Endothelial cell of umbilical vein (primary cell): ENCODE measurements at regions of chr2 and their contacts with region 1.

Region 1: DNA sequence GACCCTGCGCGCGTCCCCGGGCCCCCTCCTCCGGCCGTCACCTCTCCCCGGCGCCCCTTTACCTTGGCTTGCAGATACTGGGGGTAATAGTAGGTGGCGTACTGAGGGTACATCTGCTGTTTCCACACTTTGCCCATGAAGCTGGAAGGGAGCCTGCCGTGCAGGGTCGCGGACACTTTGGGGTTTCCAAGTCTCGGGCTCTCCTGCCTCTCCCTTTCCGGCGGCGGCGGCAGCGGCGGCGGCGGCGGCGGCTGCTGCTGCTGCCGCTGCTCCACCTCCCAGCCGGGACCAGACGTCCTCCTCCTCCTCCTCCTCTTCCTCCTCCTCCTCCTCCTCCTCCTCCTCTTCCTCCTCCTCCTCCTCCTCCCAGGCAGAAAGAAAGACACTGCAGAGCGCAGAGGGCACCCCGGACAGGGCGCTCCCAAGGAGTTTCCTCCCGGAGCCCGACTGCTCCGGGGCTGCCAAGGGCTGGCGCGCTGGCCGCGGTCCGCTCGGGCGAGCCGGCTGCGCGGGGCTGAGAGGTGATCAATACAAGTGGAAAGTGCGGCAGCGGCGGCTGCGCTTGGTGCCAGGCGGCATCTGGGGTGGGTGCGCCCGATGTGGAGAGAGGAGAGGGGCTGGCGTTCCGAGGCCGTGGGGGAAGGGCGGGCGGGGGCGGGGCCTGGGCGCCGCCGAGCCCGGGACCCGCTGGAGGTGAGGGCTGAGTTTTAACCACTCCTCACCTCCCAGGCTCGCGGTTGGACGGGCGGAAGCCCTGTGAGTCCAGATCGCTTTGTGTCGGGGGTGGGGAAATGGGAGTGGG is at the start of gene RBMS1:
- DNase-seq: no peak
- H3K4me3 ChIP-seq: peak within 1 kb of the TSS; percentile 98 to 100 (median 99)
- H3K27ac ChIP-seq: peak within 1 kb of the TSS; percentile 89
- H3K4me1 ChIP-seq: peaks cover 25% of the 10 kb centered on the region
- H3K27me3 ChIP-seq: no peaks in the 10 kb centered on the region
- CTCF ChIP-seq: no peak
- POLR2A ChIP-seq: no peak
- total RNA-seq, gene RBMS1: 93.3 and 94.8 TPM in 2 replicates

Region 2: GRCh38 chr2:160332318-160332717 is 161.1 kb before region 1 on chr2:
- CTCF ChIA-PET with region 1: interaction called, 3 read pairs
- POLR2A ChIA-PET with region 1: no interaction called
- dilution Hi-C with region 1: no loop called
- intact Hi-C with region 1: loop called (anchors 1 kb)
- DNase-seq: peak; percentile 70
- H3K4me3 ChIP-seq: no peak overlapping the region
- H3K27ac ChIP-seq: no peak overlapping the region
- H3K4me1 ChIP-seq: peaks cover 35% of the 10 kb centered on the region
- H3K27me3 ChIP-seq: no peaks in the 10 kb centered on the region
- CTCF ChIP-seq: peak in 1 of 2 donors; percentile 1
- POLR2A ChIP-seq: no peak

Region 3: DNA sequence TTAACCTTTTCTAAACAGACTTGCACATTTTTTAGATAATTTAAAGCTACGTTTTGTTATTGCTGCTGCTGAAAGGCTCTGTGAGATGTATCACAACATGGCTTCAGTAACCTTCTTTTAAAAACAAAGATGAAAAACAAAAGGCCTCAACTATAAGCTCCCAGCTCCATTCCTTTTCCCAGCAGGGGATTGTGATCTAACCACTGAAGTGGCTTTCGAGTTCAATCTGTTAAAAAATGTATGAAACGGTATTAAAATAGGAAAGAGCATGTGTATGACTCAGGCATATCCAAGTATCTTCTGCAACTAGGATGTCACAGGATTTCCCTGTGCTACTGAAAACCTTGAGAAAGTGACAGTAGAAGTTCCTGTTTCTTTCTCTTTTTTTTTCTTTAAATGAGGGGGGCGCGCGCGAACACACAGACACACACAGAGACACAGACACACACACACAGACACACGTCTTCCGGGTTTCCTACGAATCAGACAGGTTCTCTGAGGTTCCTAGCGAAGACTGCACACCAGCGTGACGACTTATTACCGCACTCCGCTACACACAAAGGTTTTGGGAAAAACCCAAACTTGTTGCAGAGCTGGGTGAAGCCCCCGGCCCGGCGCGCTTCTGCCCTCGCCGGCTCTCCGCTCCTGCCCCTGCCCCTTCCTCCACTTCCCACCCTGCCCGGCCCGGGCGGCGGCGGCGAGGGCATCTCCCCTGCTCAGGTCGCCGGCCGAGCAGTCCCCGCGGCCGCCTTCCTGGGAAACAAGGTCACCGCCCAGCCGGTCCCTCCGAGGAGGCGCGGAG is 86.6 kb before region 1 on chr2:
- CTCF ChIA-PET with region 1: no interaction called
- POLR2A ChIA-PET with region 1: no interaction called
- dilution Hi-C with region 1: no loop called
- intact Hi-C with region 1: loop called (anchors 2 kb)
- DNase-seq: peak; percentile 77
- H3K4me3 ChIP-seq: peak overlapping the region; percentile 89 to 98 (median 95)
- H3K27ac ChIP-seq: peak overlapping the region; percentile 90
- H3K4me1 ChIP-seq: peaks cover 72% of the 10 kb centered on the region
- H3K27me3 ChIP-seq: no peaks in the 10 kb centered on the region
- CTCF ChIP-seq: no peak
- POLR2A ChIP-seq: peak; percentile 49

Region 4: DNA sequence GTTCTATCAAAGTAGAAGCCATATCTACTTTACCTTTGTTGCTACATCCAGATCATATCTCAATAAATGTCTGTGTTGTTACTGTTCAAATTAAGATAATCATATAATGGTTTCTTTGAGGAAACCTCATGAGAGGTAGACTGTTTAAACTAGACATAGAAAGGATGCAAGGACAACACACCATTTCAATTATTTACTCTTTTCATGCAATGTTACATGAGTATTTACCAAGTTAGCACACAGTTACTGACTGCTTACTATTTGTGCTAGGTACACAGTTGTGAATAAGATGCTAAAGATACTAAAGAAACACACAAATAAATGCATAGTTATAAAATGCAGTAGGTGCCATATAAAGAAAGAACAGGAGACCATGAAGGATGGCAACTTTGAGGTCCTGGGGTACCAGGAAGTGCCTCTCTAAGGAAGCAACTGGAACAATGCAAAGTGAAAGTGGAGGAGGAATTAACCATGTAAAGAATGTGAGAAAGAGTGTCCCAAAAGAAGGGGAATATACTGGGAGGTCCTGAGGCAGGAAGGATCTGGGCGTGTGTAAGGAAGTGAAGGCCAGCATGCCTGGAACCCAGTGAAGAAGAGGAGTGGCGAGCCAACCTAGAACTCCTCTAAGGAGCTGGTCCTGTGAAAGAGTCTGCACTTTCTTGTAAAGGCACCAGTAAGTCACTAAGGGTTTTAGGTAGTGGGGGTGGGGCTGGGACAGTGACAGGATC is 39.2 kb before region 1 on chr2:
- CTCF ChIA-PET with region 1: no interaction called
- POLR2A ChIA-PET with region 1: interaction called, 8 read pairs
- dilution Hi-C with region 1: no loop called
- intact Hi-C with region 1: loop called (anchors 2 kb)
- DNase-seq: peak; percentile 35
- H3K4me3 ChIP-seq: no peak overlapping the region
- H3K27ac ChIP-seq: no peak overlapping the region
- H3K4me1 ChIP-seq: peaks cover 23% of the 10 kb centered on the region
- H3K27me3 ChIP-seq: no peaks in the 10 kb centered on the region
- CTCF ChIP-seq: no peak
- POLR2A ChIP-seq: no peak

Region 5: GRCh38 chr2:160918906-160919503 is 425.6 kb after region 1 on chr2:
- CTCF ChIA-PET with region 1: interaction called, 4 read pairs
- POLR2A ChIA-PET with region 1: no interaction called
- dilution Hi-C with region 1: no loop called
- intact Hi-C with region 1: loop called (anchors 1 kb)
- DNase-seq: peak; percentile 68
- H3K4me3 ChIP-seq: no peak overlapping the region
- H3K27ac ChIP-seq: no peak overlapping the region
- H3K4me1 ChIP-seq: peaks cover 11% of the 10 kb centered on the region
- H3K27me3 ChIP-seq: no peaks in the 10 kb centered on the region
- CTCF ChIP-seq: peak; percentile 68 to 73
- POLR2A ChIP-seq: no peak